ENCODE measurements at regions of chr13 and their contacts with region 1.

Region 1: DNA sequence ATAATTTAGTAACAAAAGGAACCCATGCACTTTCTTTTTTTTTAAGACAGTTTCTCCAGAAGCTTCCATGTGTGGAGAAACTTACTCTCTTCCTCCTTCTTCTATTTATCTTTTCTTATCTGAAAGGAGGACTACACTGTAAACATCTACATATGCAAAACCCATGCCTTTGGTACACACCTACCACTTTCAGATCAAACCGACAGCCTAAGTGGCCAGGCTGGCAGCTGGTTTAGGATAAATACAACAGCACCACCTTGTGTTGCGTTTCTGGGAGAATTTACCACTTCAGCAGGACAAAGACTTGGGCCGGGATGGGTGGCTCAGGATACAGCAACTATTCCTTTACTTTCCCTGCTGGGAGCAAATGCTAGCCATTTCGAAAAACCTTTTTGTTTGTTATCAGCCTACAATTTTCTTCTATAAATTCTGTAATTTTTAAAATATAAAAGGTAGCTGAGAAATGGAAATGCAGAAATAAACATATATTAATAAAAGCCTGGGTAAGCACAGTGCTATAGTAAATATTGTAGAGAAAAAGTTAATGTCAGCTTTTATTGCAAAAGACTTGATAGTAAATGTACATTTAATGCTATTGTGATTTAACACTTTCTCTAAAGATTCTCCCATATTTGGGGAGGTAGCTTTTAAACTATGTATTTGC is 94.0 kb upstream of the RFC3 start:
- DNase-seq: peak; percentile 57 to 73 (median 69)
- H3K4me3 ChIP-seq: no peak overlapping the region
- H3K4me3 Mint-ChIP-seq: no peak overlapping the region
- H3K27ac ChIP-seq: no peak overlapping the region
- H3K27ac Mint-ChIP-seq: peak overlapping the region in 1 of 7 donors; percentile 3
- H3K4me1 ChIP-seq: peaks cover 42 to 44% of the 10 kb centered on the region in 2 donors
- H3K4me1 Mint-ChIP-seq: peaks cover 47% of the 10 kb centered on the region
- H3K27me3 ChIP-seq: no peaks in the 10 kb centered on the region
- H3K27me3 Mint-ChIP-seq: no peaks in the 10 kb centered on the region
- CTCF ChIP-seq: peak; percentile 79

Region 2: GRCh38 chr13:33228648-33229445 is 495.1 kb before region 1 on chr13:
- intact Hi-C with region 1: loop called in 1 of 2 experiments (anchors 5 kb)
- DNase-seq: peak in 2 of 3 donors; percentile 38 to 49
- H3K4me3 ChIP-seq: peak overlapping the region in 1 of 3 experiments; percentile 34
- H3K4me3 Mint-ChIP-seq: peak overlapping the region in 1 of 2 donors; percentile 64
- H3K27ac ChIP-seq: peak overlapping the region in 1 of 2 donors; percentile 9
- H3K27ac Mint-ChIP-seq: peak overlapping the region in 3 of 7 donors; percentile 21 to 38 (median 27)
- H3K4me1 ChIP-seq: peaks cover 7 to 9% of the 10 kb centered on the region in 2 donors
- H3K4me1 Mint-ChIP-seq: peaks cover 12% of the 10 kb centered on the region
- H3K27me3 ChIP-seq: no peaks in the 10 kb centered on the region
- H3K27me3 Mint-ChIP-seq: peaks cover 0 to 4% (median 0%) of the 10 kb centered on the region in 3 donors
- CTCF ChIP-seq: peak; percentile 97

Region 3: DNA sequence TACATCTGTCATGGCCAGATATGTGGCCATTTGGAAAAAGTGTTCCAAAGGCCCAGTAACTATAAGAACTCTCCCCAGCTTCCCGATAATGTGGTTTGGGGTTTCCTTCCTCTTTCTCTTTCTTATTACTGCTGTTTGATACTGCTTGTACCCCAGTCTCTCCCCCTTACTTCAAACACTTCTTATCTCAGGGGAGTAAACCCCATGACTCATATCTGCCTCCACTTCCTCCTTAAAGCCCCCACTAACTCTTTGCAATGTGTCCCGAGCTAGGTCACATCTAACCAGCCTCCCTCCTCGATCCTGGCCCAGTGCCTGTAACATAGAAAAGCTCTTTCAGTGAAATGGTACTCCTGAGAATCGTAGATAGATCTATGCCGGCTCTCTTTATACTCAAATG is 356.0 kb before region 1 on chr13:
- intact Hi-C with region 1: loop called in 1 of 2 experiments (anchors 10 kb)
- DNase-seq: peak in 2 of 3 donors; percentile 58 to 61
- H3K4me3 ChIP-seq: peak overlapping the region in 1 of 3 experiments; percentile 25
- H3K4me3 Mint-ChIP-seq: peak overlapping the region; percentile 22 to 48
- H3K27ac ChIP-seq: peak overlapping the region in 1 of 2 donors; percentile 22
- H3K27ac Mint-ChIP-seq: peak overlapping the region; percentile 55 to 89 (median 70)
- H3K4me1 ChIP-seq: peaks cover 21 to 22% of the 10 kb centered on the region in 2 donors
- H3K4me1 Mint-ChIP-seq: peaks cover 24% of the 10 kb centered on the region
- H3K27me3 ChIP-seq: no peaks in the 10 kb centered on the region
- H3K27me3 Mint-ChIP-seq: peaks cover 0 to 3% (median 0%) of the 10 kb centered on the region in 3 donors
- CTCF ChIP-seq: no peak

Region 4: DNA sequence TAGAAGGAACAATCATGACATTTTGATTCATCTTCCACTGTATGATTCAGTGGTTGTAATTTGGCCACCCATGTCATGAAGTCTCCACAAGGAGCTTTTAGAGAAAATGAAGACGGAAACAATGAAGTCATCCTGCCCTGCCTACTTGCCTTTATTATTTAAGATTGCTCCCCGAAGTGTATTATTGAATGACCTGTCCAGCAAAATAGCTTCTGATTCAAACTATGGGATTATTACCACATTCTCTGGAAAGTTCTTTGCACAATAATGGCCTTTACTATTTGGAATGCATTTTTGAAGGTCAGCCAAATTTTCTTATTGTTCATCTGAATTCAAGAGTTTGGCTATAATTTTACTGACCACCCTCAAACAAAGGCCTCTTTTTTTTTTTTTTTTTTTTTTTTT is 16.2 kb after region 1 on chr13:
- intact Hi-C with region 1: no loop called
- DNase-seq: no peak
- H3K4me3 ChIP-seq: no peak overlapping the region
- H3K4me3 Mint-ChIP-seq: no peak overlapping the region
- H3K27ac ChIP-seq: no peak overlapping the region
- H3K27ac Mint-ChIP-seq: peak overlapping the region in 2 of 7 donors; percentile 37 to 47
- H3K4me1 ChIP-seq: peaks cover 36 to 37% of the 10 kb centered on the region in 2 donors
- H3K4me1 Mint-ChIP-seq: peaks cover 44% of the 10 kb centered on the region
- H3K27me3 ChIP-seq: no peaks in the 10 kb centered on the region
- H3K27me3 Mint-ChIP-seq: peaks cover 0 to 1% (median 0%) of the 10 kb centered on the region in 3 donors
- CTCF ChIP-seq: no peak